Activated T-helper 1 cell treated with anti-CD3 and anti-CD28 coated beads, Interleukin-12 subunit alpha, Interleukin-12 subunit beta, Interleukin-2, Interleukin-4 antibody, amounts not matched to agents 30 ng/mL and 10 ng/mL and 1 ng/mL, durations not matched to agents 14 hours and 24 hours and 36 hours (primary cell): ENCODE measurements at regions of chr3 and their contacts with region 1.

Region 1: GRCh38 chr3:50298836-50299637 is at the starts of genes HYAL3 and NAA80:
- DNase-seq: peak; percentile 99
- H3K4me3 Mint-ChIP-seq: peak within 1 kb of the TSS; percentile 94
- H3K27ac Mint-ChIP-seq: peak within 1 kb of the TSS; percentile 95
- H3K4me1 Mint-ChIP-seq: peaks cover 15% of the 10 kb centered on the region
- H3K27me3 Mint-ChIP-seq: no peaks in the 10 kb centered on the region
- total RNA-seq, gene HYAL3: 7.9 and 8.0 TPM in 2 replicates
- total RNA-seq, gene NAA80: 18.1 and 19.6 TPM in 2 replicates

Region 2: GRCh38 chr3:49906004-49906743 is 392.9 kb before region 1 on chr3:
- intact Hi-C with region 1: loop called (anchors 1 kb)
- DNase-seq: peak; percentile 29
- H3K4me3 Mint-ChIP-seq: peak overlapping the region; percentile 16
- H3K27ac Mint-ChIP-seq: peak overlapping the region; percentile 57
- H3K4me1 Mint-ChIP-seq: peaks cover 32% of the 10 kb centered on the region
- H3K27me3 Mint-ChIP-seq: no peaks in the 10 kb centered on the region

Region 3: GRCh38 chr3:50227390-50228183 is 71.5 kb before region 1 on chr3:
- intact Hi-C with region 1: loop called (anchors 1 kb)
- DNase-seq: peak; percentile 91
- H3K4me3 Mint-ChIP-seq: peak overlapping the region; percentile 90
- H3K27ac Mint-ChIP-seq: peak overlapping the region; percentile 90
- H3K4me1 Mint-ChIP-seq: peaks cover 34% of the 10 kb centered on the region
- H3K27me3 Mint-ChIP-seq: peaks cover 13% of the 10 kb centered on the region

Region 4: DNA sequence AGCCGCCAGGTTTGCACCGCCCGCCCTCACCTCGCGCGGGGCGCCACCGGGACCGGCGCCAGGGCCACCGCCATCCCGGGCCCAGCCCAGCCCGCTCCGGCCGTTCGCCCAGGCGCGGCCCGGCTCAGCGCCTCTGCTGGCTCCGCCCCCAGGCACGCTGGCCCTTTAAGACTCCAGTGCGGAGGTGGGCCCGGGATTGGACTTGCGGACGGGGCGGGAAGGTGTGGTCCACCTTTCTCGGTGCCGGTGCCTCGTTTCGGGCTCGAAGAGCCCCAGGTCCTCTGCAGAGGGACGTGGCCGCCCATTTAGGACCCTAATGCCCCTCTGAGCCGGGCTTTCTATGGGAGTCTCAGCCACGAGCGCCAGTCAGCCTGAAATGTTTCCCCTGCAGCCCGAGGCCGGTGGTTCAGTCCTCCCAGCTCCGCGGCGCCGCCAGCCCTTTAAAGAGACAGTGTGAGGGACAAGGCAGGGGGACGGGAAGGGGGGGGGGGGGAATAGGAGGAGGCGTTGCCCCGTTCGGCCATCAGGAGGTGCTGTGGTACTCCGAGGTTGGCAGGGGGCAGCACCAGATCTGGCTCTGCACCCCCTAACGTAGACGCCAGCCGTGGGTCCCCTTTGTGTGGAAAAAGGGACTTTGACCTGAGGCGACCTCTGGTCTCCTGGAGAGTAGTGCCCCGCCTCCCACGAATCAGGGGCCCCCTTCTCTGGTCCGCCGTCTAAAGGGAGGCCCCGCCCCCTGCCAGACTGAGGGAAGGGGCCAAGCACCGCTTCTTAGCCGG is 22.5 kb after region 1 on chr3:
- intact Hi-C with region 1: loop called (anchors 1 kb)
- DNase-seq: peak; percentile 81
- H3K4me3 Mint-ChIP-seq: peak overlapping the region; percentile 79
- H3K27ac Mint-ChIP-seq: peak overlapping the region; percentile 83
- H3K4me1 Mint-ChIP-seq: peaks cover 35% of the 10 kb centered on the region
- H3K27me3 Mint-ChIP-seq: no peaks in the 10 kb centered on the region

Region 5: GRCh38 chr3:50350527-50351322 is 51.7 kb after region 1 on chr3 and contains the starts of genes CYB561D2 and NPRL2:
- intact Hi-C with region 1: loop called (anchors 1 kb)
- DNase-seq: peak; percentile 100
- H3K4me3 Mint-ChIP-seq: peak within 1 kb of the TSS; percentile 95
- H3K27ac Mint-ChIP-seq: peak within 1 kb of the TSS; percentile 95
- H3K4me1 Mint-ChIP-seq: peaks cover 55% of the 10 kb centered on the region
- H3K27me3 Mint-ChIP-seq: no peaks in the 10 kb centered on the region
- total RNA-seq, gene CYB561D2: 30.0 and 35.9 TPM in 2 replicates
- total RNA-seq, gene NPRL2: 43.7 and 46.6 TPM in 2 replicates

Region 6: DNA sequence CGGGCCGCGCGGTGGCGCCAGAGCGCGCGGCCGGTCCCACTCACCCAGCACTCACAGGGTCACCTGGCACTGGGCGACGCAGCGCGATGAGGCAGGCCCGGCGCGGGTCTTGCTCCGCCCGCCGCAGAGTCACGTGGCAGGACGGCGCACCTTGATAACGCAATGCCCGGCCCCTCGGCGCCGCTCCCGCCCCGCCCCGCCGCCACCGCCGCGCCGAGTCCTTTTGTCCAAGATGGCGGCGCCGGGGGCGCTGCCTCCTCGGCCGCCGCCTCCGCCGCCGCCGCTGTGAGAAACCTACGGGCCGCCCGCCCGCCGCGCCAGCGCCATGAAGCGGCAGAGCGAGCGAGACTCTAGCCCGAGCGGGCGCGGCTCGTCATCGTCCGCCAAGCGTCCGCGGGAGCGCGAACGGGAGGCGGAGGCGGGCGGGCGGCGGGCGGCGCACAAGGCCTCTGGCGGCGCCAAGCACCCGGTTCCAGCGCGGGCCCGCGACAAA is 1092.1 kb after region 1 on chr3 and contains the start of gene RBM15B:
- intact Hi-C with region 1: loop called (anchors 1 kb)
- DNase-seq: peak; percentile 98
- H3K4me3 Mint-ChIP-seq: peak within 1 kb of the TSS; percentile 85
- H3K27ac Mint-ChIP-seq: peak within 1 kb of the TSS; percentile 86
- H3K4me1 Mint-ChIP-seq: peaks cover 66% of the 10 kb centered on the region
- H3K27me3 Mint-ChIP-seq: no peaks in the 10 kb centered on the region
- total RNA-seq, gene RBM15B: 38.5 and 39.6 TPM in 2 replicates